Body of pancreas (tissue), 4 donors: ENCODE measurements at regions of chr10 and their contacts with region 1.

Region 1: GRCh38 chr10:43292755-43293676 is 26.2 kb upstream of the RASGEF1A start:
- DNase-seq: peak; percentile 63 to 71 (median 70)
- ATAC-seq: peak; percentile 81
- H3K4me3 ChIP-seq: no peak overlapping the region
- H3K27ac ChIP-seq: no peak overlapping the region
- H3K4me1 ChIP-seq: peaks cover 7% of the 10 kb centered on the region
- H3K27me3 ChIP-seq: no peaks in the 10 kb centered on the region
- CTCF ChIP-seq: peak; percentile 52 to 79 (median 70)
- POLR2A ChIP-seq: no peak

Region 2: DNA sequence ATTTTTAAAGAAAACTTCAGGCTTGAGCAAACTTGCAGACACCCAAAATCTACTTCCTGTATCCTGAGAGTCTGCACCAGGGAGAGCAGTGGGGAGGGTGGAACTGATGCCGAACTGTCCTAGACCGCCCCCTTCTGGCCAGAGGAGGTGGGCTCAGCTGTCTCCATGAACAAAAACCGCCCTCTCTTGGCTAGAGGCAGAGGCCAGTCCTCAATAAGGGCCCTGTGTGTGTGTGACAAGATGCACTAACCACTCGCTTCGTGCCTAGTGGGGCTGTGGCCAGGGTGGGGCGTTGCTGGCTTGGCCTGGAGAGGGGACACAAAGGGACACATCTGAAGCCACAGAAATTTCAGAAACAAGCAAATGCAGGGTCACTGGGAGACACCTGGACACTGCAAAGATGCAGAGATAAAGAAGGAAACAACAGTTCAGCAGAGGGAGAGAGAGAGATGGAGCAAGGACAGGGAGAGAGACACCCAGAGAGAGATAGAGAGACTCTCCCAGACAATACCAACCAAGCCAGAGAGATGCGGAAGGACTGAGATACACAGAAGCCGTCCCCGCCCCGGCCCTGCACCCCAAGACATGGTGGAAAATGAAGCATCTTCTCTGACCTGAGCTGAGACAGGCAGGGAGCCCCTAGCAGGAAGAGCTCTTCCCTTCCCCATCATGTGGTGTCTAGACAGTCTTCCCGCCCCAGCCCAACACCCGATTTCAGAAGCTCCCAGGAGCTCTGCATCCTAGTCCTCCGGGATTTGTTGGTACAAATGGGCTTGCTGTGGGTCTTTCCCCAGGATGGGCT is 55.7 kb after region 1 on chr10:
- intact Hi-C with region 1: loop called (anchors 5 kb)
- DNase-seq: peak; percentile 82 to 91 (median 88)
- ATAC-seq: peak; percentile 96
- H3K4me3 ChIP-seq: no peak overlapping the region
- H3K27ac ChIP-seq: no peak overlapping the region
- H3K4me1 ChIP-seq: peaks cover 11% of the 10 kb centered on the region
- H3K27me3 ChIP-seq: no peaks in the 10 kb centered on the region
- CTCF ChIP-seq: peak; percentile 71 to 92 (median 83)
- POLR2A ChIP-seq: no peak

Region 3: GRCh38 chr10:43461950-43462349 is 168.9 kb after region 1 on chr10:
- intact Hi-C with region 1: loop called (anchors 5 kb)
- DNase-seq: peak in 2 of 4 donors; percentile 24 to 67
- ATAC-seq: peak; percentile 74
- H3K4me3 ChIP-seq: no peak overlapping the region
- H3K27ac ChIP-seq: no peak overlapping the region
- H3K4me1 ChIP-seq: peaks cover 6% of the 10 kb centered on the region
- H3K27me3 ChIP-seq: no peaks in the 10 kb centered on the region
- CTCF ChIP-seq: peak; percentile 59 to 81 (median 79)
- POLR2A ChIP-seq: no peak